Astrocyte of the cerebellum (primary cell): ENCODE measurements at regions of chr13 and their contacts with region 1.

Region 1: GRCh38 chr13:69496981-69497380 is 610.6 kb upstream of the ATXN8OS start:
- DNase-seq: no peak
- H3K4me3 ChIP-seq: no peak overlapping the region
- CTCF ChIP-seq: no peak

Region 2: DNA sequence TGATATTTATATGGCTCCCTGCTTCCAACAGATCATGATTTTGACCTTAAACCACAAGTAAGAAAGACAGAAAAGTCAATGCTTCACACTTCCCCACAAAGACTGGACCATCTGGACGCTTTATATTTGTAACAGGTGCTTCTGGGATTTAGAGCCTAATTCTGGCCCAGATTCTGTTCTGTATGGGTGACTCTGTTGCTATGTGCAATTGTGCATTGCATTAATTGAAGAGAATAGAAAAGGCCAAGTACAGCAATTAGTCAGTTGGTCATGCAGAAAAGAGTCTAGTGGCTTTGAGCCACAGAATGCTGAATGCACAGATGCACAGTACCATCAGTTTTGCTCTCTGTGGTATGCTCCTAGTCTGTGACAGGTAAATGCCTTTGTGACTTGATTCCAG is 46.7 kb before region 1 on chr13:
- in situ Hi-C with region 1: loop called (anchors 5 kb)
- DNase-seq: no peak
- H3K4me3 ChIP-seq: no peak overlapping the region
- CTCF ChIP-seq: no peak

Region 3: DNA sequence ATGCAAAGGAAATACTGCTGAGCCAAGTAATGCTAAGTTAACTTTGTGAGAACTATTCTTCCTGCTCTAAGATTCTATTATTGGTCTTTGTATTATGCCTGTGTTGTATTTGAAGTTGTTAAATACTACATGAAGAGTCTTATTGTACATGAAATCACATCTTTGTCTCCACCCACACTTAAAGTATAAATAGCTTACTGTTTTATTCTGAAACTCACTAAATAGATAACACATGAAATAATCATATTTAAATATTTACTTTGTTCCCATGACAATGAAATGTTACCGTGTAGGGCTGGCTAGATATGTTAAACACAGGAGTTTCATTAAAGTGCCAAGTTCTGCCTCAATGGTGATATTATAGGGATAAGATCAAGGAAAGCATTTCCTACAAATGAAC is 48.6 kb after region 1 on chr13:
- in situ Hi-C with region 1: no loop called
- DNase-seq: no peak
- H3K4me3 ChIP-seq: no peak overlapping the region
- CTCF ChIP-seq: no peak

Region 4: GRCh38 chr13:69585656-69586055 is 88.7 kb after region 1 on chr13:
- in situ Hi-C with region 1: no loop called
- DNase-seq: no peak
- H3K4me3 ChIP-seq: no peak overlapping the region
- CTCF ChIP-seq: no peak